ENCODE measurements at regions of chr6 and their contacts with region 1.

Region 1: GRCh38 chr6:13795041-13795750 is 19.2 kb downstream of the MCUR1 start:
- DNase-seq: peak; percentile 75 to 79 (median 77)
- ATAC-seq: peak; percentile 92 to 98 (median 94)
- H3K4me3 ChIP-seq: no peak overlapping the region
- H3K27ac ChIP-seq: no peak overlapping the region
- H3K4me1 ChIP-seq: no peaks in the 10 kb centered on the region
- H3K27me3 ChIP-seq: no peaks in the 10 kb centered on the region
- CTCF ChIP-seq: peak; percentile 85 to 97 (median 96)
- POLR2A ChIP-seq: no peak

Region 2: GRCh38 chr6:14066782-14067406 is 271.7 kb after region 1 on chr6:
- intact Hi-C with region 1: loop called in 1 of 2 experiments (anchors 10 kb)
- DNase-seq: no peak
- ATAC-seq: peak; percentile 81 to 85 (median 84)
- H3K4me3 ChIP-seq: no peak overlapping the region
- H3K27ac ChIP-seq: no peak overlapping the region
- H3K4me1 ChIP-seq: peaks cover 0 to 8% (median 4%) of the 10 kb centered on the region in 4 donors
- H3K27me3 ChIP-seq: no peaks in the 10 kb centered on the region
- CTCF ChIP-seq: peak; percentile 58 to 72 (median 62)
- POLR2A ChIP-seq: no peak

Region 3: DNA sequence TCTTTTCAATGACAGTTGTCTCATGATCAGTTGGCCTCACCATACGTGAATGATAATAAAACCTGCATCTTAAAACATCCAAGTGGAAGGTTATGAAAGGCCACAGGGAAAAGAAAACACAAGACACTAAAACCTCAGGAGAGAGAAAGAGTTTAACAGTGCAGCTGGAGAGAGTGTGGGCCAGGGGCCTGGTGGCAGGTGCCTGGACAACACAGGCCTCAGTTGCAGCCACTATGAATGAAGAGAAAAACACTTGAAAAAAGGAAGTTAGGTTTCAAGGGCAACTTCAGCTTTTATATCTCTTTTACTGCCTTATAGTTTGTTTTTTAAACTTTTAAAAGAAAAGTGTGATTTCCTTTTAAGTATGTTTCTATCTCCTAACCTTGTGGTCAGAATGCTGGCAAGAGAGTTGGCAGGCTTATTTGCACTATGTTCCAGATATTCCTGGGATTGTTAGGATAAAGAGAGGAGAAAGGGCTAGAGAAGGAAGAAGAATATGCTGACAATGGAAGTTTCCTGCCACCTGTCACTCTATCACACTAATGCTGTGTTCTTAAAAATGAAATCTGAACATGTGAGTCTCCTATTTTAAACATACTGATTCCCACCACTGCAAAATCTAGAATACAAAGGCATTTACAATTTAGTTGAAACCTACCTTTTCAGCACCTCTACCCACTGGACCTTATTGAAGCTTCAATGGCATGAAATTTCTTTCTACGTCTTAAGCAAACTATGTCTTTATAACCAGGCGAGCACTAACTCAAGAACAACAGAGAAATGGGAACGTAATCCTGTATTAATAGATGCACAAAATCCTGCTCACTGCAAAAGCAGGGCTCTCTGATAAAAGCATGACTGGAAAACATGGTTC is 544.8 kb after region 1 on chr6:
- intact Hi-C with region 1: no loop called
- DNase-seq: no peak
- ATAC-seq: no peak
- H3K4me3 ChIP-seq: no peak overlapping the region
- H3K27ac ChIP-seq: no peak overlapping the region
- H3K4me1 ChIP-seq: no peaks in the 10 kb centered on the region
- H3K27me3 ChIP-seq: no peaks in the 10 kb centered on the region
- CTCF ChIP-seq: no peak
- POLR2A ChIP-seq: no peak

Measured in right lobe of liver (tissue), 6 donors.